Thyroid gland (tissue), 4 donors: ENCODE measurements at regions of chr11 and their contacts with region 1.

Region 1: GRCh38 chr11:5666391-5666770 is 18.5 kb downstream of the TRIM5 start:
- DNase-seq: no peak
- H3K4me3 ChIP-seq: no peak overlapping the region
- H3K27ac ChIP-seq: no peak overlapping the region
- H3K4me1 ChIP-seq: no peaks in the 10 kb centered on the region
- H3K27me3 ChIP-seq: no peaks in the 10 kb centered on the region
- CTCF ChIP-seq: no peak
- POLR2A ChIP-seq: no peak

Region 2: DNA sequence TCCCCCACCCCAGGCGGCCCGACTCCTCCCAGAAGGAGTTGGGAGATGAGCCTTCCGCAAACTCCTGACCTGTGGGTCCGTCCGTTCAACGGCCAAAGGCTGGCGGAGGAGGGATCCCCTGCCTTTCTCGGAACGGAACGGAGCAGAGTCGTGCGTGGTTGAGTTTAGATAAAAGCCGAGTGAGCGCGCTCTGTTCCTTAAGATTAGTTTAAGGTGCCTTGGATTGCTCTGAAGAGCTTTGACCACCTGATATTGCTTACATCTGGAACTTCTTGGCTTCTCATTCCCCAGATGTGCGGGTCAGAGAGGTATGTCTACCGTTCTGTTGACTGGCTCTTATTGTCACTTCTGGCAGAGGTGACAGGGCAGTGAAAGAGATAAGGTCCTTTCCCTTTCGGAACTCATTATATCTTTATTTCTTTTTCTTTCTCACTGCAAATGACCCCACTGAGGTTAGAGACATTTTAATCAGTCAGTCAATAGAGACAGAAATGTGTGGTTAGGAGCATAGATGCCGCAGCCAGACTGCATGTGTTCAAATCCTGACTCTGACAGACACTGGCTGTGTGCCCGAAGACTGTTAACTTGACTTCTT is 69.7 kb before region 1 on chr11 and contains the start of gene TRIM6:
- intact Hi-C with region 1: loop called (anchors 10 kb)
- DNase-seq: peak; percentile 63 to 70
- H3K4me3 ChIP-seq: peak within 1 kb of the TSS; percentile 30 to 54 (median 35)
- H3K27ac ChIP-seq: peak within 1 kb of the TSS; percentile 53 to 84 (median 70)
- H3K4me1 ChIP-seq: peaks cover 16 to 29% of the 10 kb centered on the region in 2 donors
- H3K27me3 ChIP-seq: no peaks in the 10 kb centered on the region
- CTCF ChIP-seq: no peak
- POLR2A ChIP-seq: peak in 1 of 2 donors; percentile 40
- total RNA-seq, gene TRIM6: 7.1 to 9.6 (median 9.2) TPM